ENCODE measurements at regions of chr5 and their contacts with region 1.

Region 1: GRCh38 chr5:38420691-38421390 is 135.6 kb downstream of the LIFR start:
- ATAC-seq: peak; percentile 40 to 92 (median 72)
- H3K4me3 ChIP-seq: no peak overlapping the region
- H3K27ac ChIP-seq: no peak overlapping the region
- H3K4me1 ChIP-seq: peaks cover 7 to 21% of the 10 kb centered on the region in 2 donors

Region 2: DNA sequence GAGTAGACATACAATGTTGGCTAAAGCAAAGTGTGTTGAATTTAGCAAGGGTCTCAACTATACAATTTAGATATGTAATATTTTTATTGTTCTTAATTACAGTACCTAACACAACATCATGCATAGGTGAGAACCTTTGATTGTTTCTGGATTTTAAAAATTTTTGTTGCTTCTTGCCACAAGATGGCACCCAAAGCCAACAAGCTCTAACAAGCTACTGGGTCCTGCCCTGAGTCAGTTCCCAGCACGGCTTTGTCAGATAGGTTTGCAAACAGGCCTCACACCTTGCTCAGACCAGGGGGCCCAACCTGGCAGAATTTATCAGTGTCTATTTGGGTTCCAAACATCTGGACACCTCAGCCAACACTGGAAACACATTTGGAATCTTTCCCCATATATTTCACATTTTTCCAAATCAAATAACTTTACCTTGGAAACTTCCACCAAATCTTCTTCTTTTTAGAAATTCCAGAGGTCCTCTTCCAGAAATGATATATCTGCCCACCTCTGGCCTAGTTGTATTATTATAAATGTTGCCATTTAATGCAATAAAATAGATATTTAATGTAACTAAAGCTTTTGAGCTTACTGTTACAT is 212.0 kb before region 1 on chr5:
- in situ Hi-C with region 1: loop called in 1 of 9 experiments (anchors 25 kb)
- ATAC-seq: peak in 6 of 8 experiments; percentile 46 to 77 (median 54)
- H3K4me3 ChIP-seq: no peak overlapping the region
- H3K27ac ChIP-seq: no peak overlapping the region
- H3K4me1 ChIP-seq: no peaks in the 10 kb centered on the region